Activated CD4-positive, alpha-beta T cell treated with anti-CD3 and anti-CD28 coated beads for 36 hours (primary cell): ENCODE measurements at regions of chr7 and their contacts with region 1.

Region 1: DNA sequence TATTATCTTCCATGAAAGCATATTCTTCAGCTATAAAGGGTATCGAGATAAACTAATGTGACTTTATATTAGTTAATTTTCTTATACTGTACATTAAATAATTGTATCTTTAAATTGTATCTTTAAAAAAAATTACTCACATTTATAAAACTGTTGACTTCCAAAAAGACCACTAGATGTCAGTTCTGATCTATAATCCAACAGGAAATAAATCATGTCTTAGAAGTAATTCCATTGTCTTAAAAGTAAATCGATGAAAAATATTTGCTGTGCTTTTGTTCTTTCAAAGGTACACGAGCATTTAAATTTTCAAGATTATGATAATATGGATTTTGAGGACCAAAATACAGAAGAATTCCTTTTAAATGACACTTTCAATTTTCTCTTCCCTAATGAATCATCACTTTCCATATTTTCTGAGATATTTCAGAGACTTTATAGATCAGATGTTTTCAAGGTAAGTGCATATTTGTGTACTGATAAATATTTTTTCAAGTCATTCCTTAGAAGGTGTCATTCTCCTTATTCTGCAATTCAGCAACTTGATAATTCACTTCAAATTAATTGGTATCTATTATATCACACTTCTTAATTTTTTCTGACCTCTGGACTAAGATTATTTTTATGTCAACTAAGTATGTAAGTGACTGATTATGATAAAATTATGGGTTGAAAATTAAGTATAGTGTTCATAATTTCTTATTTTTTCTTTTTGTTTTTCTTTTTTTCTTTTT is 138.5 kb downstream of the CPED1 start:
- DNase-seq: no peak
- ATAC-seq: no peak
- H3K4me3 Mint-ChIP-seq: no peak overlapping the region
- H3K27ac Mint-ChIP-seq: no peak overlapping the region
- H3K4me1 Mint-ChIP-seq: no peaks in the 10 kb centered on the region
- H3K27me3 Mint-ChIP-seq: peaks cover 11% of the 10 kb centered on the region

Region 2: GRCh38 chr7:121337398-121337797 is 210.4 kb after region 1 on chr7:
- CTCF ChIA-PET with region 1: no interaction called
- POLR2A ChIA-PET with region 1: no interaction called
- intact Hi-C with region 1: loop called in 1 of 2 experiments (anchors 5 kb)
- DNase-seq: no peak
- ATAC-seq: no peak
- H3K4me3 Mint-ChIP-seq: no peak overlapping the region
- H3K27ac Mint-ChIP-seq: no peak overlapping the region
- H3K4me1 Mint-ChIP-seq: no peaks in the 10 kb centered on the region
- H3K27me3 Mint-ChIP-seq: peaks cover 16% of the 10 kb centered on the region